B cell (primary cell): ENCODE measurements at regions of chr7 and their contacts with region 1.

Region 1: DNA sequence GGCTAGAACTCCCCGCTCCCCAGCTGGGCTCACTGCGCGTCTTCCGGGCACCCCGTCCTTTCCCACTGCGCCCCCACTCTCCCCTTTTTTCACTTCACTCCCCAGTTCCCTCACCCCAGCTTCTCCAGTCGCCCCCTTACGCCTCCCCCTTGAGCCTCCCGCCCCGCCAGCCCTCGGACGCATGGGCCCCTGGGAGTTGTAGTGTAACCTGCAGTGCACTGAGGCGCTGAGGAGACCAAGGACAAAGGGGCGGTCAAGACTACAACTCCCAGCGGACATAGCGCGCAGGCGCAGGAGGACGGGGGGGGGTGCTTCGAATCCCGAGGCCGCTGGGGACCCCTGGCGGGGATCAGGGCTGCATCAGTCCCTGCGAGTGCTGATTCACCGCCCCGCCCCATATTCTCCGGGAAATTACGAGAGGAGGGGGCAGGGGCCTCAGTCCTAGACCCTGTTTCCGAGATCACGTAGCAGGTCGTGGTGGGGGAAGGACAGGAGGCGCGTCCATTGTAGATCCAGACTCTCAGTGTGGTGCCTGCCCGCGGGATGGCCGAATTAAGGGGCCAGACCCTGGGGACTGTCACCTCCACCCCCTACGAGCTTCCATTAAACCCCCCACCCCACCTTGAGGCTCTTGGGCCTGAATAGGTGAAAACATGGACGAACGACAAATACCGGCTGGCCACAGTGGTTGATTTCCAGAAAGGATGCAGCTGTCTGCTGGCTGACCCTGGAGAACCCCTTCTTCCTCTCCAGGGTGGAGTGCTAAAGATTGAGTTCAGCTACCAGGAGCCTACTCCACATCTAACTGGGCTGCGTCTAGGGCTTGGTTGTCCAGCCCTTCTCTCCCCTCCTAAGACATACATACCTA is 554 bp upstream of the YWHAG start:
- DNase-seq: peak; percentile 98
- ATAC-seq: peak; percentile 89
- H3K4me3 ChIP-seq: peak overlapping the region; percentile 34 to 99 (median 95)
- H3K4me3 Mint-ChIP-seq: peak overlapping the region; percentile 93
- H3K27ac ChIP-seq: peak overlapping the region; percentile 90 to 94
- H3K27ac Mint-ChIP-seq: peak overlapping the region; percentile 99
- H3K4me1 ChIP-seq: peaks cover 17 to 19% of the 10 kb centered on the region in 2 donors
- H3K4me1 Mint-ChIP-seq: peaks cover 39% of the 10 kb centered on the region
- H3K27me3 ChIP-seq: no peaks in the 10 kb centered on the region
- H3K27me3 Mint-ChIP-seq: no peaks in the 10 kb centered on the region
- CTCF ChIP-seq: peak; percentile 74

Region 2: GRCh38 chr7:76047811-76048667 is 311.3 kb before region 1 on chr7 and contains the starts of genes MDH2 and STYXL1:
- CTCF ChIA-PET with region 1: no interaction called
- POLR2A ChIA-PET with region 1: interaction called, 3 read pairs
- intact Hi-C with region 1: loop called (anchors 5 kb)
- DNase-seq: peak; percentile 90
- ATAC-seq: peak; percentile 93
- H3K4me3 ChIP-seq: peak within 1 kb of the TSS; percentile 91 to 99 (median 99)
- H3K4me3 Mint-ChIP-seq: peak within 1 kb of the TSS; percentile 94
- H3K27ac ChIP-seq: peak within 1 kb of the TSS; percentile 77 to 91
- H3K27ac Mint-ChIP-seq: peak within 1 kb of the TSS; percentile 93
- H3K4me1 ChIP-seq: peaks cover 14 to 16% of the 10 kb centered on the region in 2 donors
- H3K4me1 Mint-ChIP-seq: peaks cover 44% of the 10 kb centered on the region
- H3K27me3 ChIP-seq: no peaks in the 10 kb centered on the region
- H3K27me3 Mint-ChIP-seq: no peaks in the 10 kb centered on the region
- CTCF ChIP-seq: no peak
- total RNA-seq, gene MDH2: 77.1 and 77.2 TPM in 2 replicates
- total RNA-seq, gene STYXL1: 15.2 and 17.8 TPM in 2 replicates

Region 3: DNA sequence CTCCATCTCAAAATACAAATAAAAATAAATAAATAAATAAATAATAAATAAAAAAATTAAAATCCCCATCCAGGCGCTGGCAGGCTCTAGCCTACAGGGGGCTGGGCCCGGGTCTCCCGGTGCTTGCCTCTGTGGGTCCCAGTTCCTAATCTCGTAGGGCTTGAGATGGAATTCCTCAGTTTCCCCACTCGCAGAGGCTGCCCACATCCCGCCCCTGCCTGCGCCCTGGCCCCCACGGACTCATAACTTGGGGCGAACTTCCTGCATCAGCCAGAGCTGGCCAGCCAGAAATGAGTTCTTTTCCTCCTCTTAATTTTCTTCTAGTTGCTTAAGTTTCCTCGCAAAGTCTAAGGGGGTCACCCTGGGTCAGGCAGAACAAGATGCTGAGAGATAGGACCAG is 179.7 kb before region 1 on chr7:
- CTCF ChIA-PET with region 1: interaction called, 12 read pairs
- POLR2A ChIA-PET with region 1: no interaction called
- intact Hi-C with region 1: loop called (anchors 1 kb)
- DNase-seq: no peak
- ATAC-seq: no peak
- H3K4me3 ChIP-seq: no peak overlapping the region
- H3K4me3 Mint-ChIP-seq: no peak overlapping the region
- H3K27ac ChIP-seq: no peak overlapping the region
- H3K27ac Mint-ChIP-seq: no peak overlapping the region
- H3K4me1 ChIP-seq: peaks cover 0 to 6% of the 10 kb centered on the region in 2 donors
- H3K4me1 Mint-ChIP-seq: peaks cover 3% of the 10 kb centered on the region
- H3K27me3 ChIP-seq: no peaks in the 10 kb centered on the region
- H3K27me3 Mint-ChIP-seq: peaks cover 4% of the 10 kb centered on the region
- CTCF ChIP-seq: no peak

Region 4: GRCh38 chr7:76291343-76292212 is 67.8 kb before region 1 on chr7:
- CTCF ChIA-PET with region 1: interaction called, 21 read pairs
- POLR2A ChIA-PET with region 1: no interaction called
- intact Hi-C with region 1: loop called (anchors 1 kb)
- DNase-seq: peak; percentile 85
- ATAC-seq: peak; percentile 77
- H3K4me3 ChIP-seq: no peak overlapping the region
- H3K4me3 Mint-ChIP-seq: no peak overlapping the region
- H3K27ac ChIP-seq: no peak overlapping the region
- H3K27ac Mint-ChIP-seq: no peak overlapping the region
- H3K4me1 ChIP-seq: peaks cover 0 to 16% of the 10 kb centered on the region in 2 donors
- H3K4me1 Mint-ChIP-seq: peaks cover 11% of the 10 kb centered on the region
- H3K27me3 ChIP-seq: peaks cover 0 to 12% (median 2%) of the 10 kb centered on the region in 4 experiments
- H3K27me3 Mint-ChIP-seq: peaks cover 10% of the 10 kb centered on the region
- CTCF ChIP-seq: peak; percentile 98

Region 5: GRCh38 chr7:76302347-76303201 is 56.8 kb before region 1 on chr7 and contains the start of gene HSPB1:
- CTCF ChIA-PET with region 1: no interaction called
- POLR2A ChIA-PET with region 1: no interaction called
- intact Hi-C with region 1: loop called (anchors 1 kb)
- DNase-seq: peak; percentile 81
- ATAC-seq: peak; percentile 75
- H3K4me3 ChIP-seq: peak within 1 kb of the TSS; percentile 38 to 73 (median 66)
- H3K4me3 Mint-ChIP-seq: peak within 1 kb of the TSS; percentile 94
- H3K27ac ChIP-seq: peak within 1 kb of the TSS; percentile 52 to 65
- H3K27ac Mint-ChIP-seq: peak within 1 kb of the TSS; percentile 93
- H3K4me1 ChIP-seq: peaks cover 10 to 21% of the 10 kb centered on the region in 2 donors
- H3K4me1 Mint-ChIP-seq: peaks cover 15% of the 10 kb centered on the region
- H3K27me3 ChIP-seq: no peaks in the 10 kb centered on the region
- H3K27me3 Mint-ChIP-seq: no peaks in the 10 kb centered on the region
- CTCF ChIP-seq: no peak
- total RNA-seq, gene HSPB1: 26.8 and 34.0 TPM in 2 replicates

Region 6: GRCh38 chr7:76346778-76347177 is 12.6 kb before region 1 on chr7:
- CTCF ChIA-PET with region 1: no interaction called
- POLR2A ChIA-PET with region 1: no interaction called
- intact Hi-C with region 1: no loop called
- DNase-seq: no peak
- ATAC-seq: no peak
- H3K4me3 ChIP-seq: no peak overlapping the region
- H3K4me3 Mint-ChIP-seq: no peak overlapping the region
- H3K27ac ChIP-seq: no peak overlapping the region
- H3K27ac Mint-ChIP-seq: no peak overlapping the region
- H3K4me1 ChIP-seq: no peaks in the 10 kb centered on the region
- H3K4me1 Mint-ChIP-seq: peaks cover 25% of the 10 kb centered on the region
- H3K27me3 ChIP-seq: no peaks in the 10 kb centered on the region
- H3K27me3 Mint-ChIP-seq: no peaks in the 10 kb centered on the region
- CTCF ChIP-seq: no peak

Region 7: DNA sequence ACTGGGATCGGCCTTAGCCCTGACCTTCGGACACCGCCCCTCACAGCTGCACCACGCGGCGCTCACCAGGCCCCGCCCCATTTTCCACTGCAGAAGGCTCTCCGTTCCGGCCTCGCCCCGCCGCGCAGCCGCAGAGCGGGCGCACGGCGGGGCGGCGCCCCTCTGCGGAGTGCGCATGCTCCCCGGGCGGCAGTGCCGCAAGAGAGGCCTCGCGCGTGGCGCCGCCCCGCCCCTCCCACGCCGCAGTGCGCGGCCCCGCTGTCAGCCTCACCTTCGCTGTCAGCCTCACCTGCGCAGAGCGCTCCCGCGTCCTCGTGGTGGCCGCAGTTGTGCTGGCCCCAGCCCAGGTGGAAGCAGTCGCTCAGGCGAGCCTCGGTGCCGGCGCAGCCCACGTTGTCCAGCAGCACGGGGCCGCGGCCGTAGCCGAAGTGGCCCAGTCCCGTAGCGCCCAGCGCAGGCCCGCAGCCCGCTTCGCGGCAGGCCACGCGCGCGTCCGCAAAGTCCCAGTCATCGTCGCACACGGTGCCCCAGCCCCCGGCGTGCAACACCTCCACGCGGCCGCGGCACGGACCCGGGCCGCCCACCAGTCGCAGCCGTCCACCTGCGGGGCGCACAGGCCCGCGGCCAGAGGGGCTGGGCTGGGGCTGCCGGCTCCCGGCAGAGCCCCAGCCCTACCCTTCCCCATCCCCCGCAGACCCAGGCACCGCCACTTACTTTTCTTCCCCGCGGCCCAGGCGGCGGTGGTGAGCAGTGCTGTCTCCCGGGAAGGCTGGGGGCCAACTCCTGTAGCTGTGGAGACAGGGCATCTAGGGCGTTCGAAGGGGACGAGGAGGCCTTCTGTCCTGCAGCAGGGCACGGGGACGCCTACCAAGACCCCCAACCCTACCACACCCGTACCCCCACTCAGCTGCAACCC is 34.0 kb after region 1 on chr7:
- CTCF ChIA-PET with region 1: interaction called, 3 read pairs
- POLR2A ChIA-PET with region 1: interaction called, 6 read pairs
- intact Hi-C with region 1: loop called (anchors 1 kb)
- DNase-seq: peak; percentile 94
- ATAC-seq: peak; percentile 86
- H3K4me3 ChIP-seq: peak overlapping the region; percentile 5 to 80 (median 65)
- H3K4me3 Mint-ChIP-seq: peak overlapping the region; percentile 91
- H3K27ac ChIP-seq: peak overlapping the region; percentile 37 to 53
- H3K27ac Mint-ChIP-seq: peak overlapping the region; percentile 98
- H3K4me1 ChIP-seq: peaks cover 18 to 32% of the 10 kb centered on the region in 2 donors
- H3K4me1 Mint-ChIP-seq: peaks cover 24% of the 10 kb centered on the region
- H3K27me3 ChIP-seq: no peaks in the 10 kb centered on the region
- H3K27me3 Mint-ChIP-seq: no peaks in the 10 kb centered on the region
- CTCF ChIP-seq: no peak